ENCODE measurements at regions of chr21 and their contacts with region 1.

Region 1: DNA sequence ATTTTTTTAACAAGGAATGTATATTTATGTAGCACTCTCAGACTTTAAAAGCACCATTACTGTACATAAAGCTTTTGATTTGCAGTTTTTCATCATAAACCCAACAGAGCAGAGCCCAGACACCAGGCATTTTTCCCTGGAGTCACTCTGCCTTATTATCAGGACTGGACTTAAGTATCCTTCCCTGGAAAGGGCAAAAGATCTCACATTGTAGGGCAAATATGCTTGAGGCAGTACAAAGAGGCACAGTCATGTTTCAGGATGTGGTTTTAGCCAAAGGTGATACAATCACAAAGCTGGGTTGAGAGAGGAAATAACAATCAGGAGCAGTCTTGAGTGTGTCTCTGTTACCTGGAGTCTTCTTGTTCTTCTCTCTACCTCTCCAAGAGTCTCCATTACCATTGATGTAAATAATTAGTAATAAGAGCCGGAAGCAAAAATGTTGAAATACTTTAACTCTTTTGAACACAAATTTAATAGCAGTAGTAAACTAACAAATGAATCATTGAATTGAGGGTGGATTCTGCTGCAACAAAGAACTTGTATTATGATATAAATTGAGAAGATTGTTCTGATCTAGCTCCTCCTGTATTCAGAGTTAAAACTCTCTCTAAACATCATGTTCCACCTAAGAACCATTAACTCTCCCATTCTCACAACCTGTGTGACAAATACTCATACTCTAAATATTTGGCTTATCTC is 160.5 kb downstream of the LTN1 start:
- DNase-seq: peak in 6 of 14 experiments; percentile 3 to 86 (median 36)
- ATAC-seq: peak; percentile 90
- H3K4me3 ChIP-seq: peak overlapping the region; percentile 25
- H3K4me3 Mint-ChIP-seq: peak overlapping the region; percentile 65
- H3K27ac ChIP-seq: peak overlapping the region in 1 of 2 donors; percentile 35
- H3K27ac Mint-ChIP-seq: peak overlapping the region; percentile 79
- H3K4me1 ChIP-seq: peaks cover 39% of the 10 kb centered on the region
- H3K4me1 Mint-ChIP-seq: peaks cover 71% of the 10 kb centered on the region
- H3K27me3 ChIP-seq: no peaks in the 10 kb centered on the region
- H3K27me3 Mint-ChIP-seq: no peaks in the 10 kb centered on the region
- CTCF ChIP-seq: no peak

Region 2: DNA sequence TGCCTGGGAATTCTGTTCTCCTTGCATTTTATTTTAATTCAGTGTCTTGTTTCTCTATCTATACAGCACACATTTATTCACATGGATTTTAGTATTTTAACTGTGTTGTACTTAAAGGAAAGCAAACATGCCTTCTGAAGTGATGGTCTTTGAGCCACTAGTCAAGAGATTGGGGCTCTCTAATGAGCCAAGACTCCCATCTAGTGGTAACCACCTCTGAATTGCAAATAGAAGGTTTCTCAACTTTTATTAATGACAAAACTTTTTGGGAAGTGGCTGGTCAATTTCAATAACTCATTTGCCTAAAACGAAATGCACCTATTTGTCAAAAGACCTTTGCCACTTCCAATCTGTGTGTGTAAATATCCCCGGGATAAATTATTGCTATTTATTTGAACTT is 39.1 kb before region 1 on chr21:
- CTCF ChIA-PET with region 1: no interaction called
- POLR2A ChIA-PET with region 1: no interaction called
- intact Hi-C with region 1: loop called in 1 of 2 experiments (anchors 1 kb)
- DNase-seq: peak in 1 of 14 experiments; percentile 11
- ATAC-seq: no peak
- H3K4me3 ChIP-seq: no peak overlapping the region
- H3K4me3 Mint-ChIP-seq: no peak overlapping the region
- H3K27ac ChIP-seq: no peak overlapping the region
- H3K27ac Mint-ChIP-seq: no peak overlapping the region
- H3K4me1 ChIP-seq: no peaks in the 10 kb centered on the region
- H3K4me1 Mint-ChIP-seq: no peaks in the 10 kb centered on the region
- H3K27me3 ChIP-seq: no peaks in the 10 kb centered on the region
- H3K27me3 Mint-ChIP-seq: no peaks in the 10 kb centered on the region
- CTCF ChIP-seq: no peak

Region 3: DNA sequence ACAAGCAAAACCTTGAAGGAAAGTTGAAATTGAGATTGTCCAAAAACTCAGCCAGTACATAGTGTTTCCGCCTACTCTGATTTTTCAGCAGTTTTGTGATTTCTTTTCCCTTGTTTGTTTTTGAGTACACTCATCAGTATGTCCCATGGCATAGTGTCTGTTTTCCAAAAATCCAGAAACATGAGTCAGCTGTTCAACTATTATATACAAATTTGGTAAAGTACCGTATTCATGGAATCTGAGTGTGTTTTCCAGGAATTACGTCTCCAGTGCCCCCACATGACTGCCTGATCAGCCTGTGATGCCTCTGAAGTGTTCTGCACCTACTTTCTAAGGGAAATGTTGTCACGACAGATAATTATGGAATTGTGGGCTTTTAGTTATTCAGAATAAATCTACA is 26.3 kb before region 1 on chr21:
- CTCF ChIA-PET with region 1: no interaction called
- POLR2A ChIA-PET with region 1: no interaction called
- intact Hi-C with region 1: no loop called
- DNase-seq: no peak
- ATAC-seq: no peak
- H3K4me3 ChIP-seq: no peak overlapping the region
- H3K4me3 Mint-ChIP-seq: no peak overlapping the region
- H3K27ac ChIP-seq: no peak overlapping the region
- H3K27ac Mint-ChIP-seq: no peak overlapping the region
- H3K4me1 ChIP-seq: no peaks in the 10 kb centered on the region
- H3K4me1 Mint-ChIP-seq: no peaks in the 10 kb centered on the region
- H3K27me3 ChIP-seq: no peaks in the 10 kb centered on the region
- H3K27me3 Mint-ChIP-seq: no peaks in the 10 kb centered on the region
- CTCF ChIP-seq: no peak

Region 4: DNA sequence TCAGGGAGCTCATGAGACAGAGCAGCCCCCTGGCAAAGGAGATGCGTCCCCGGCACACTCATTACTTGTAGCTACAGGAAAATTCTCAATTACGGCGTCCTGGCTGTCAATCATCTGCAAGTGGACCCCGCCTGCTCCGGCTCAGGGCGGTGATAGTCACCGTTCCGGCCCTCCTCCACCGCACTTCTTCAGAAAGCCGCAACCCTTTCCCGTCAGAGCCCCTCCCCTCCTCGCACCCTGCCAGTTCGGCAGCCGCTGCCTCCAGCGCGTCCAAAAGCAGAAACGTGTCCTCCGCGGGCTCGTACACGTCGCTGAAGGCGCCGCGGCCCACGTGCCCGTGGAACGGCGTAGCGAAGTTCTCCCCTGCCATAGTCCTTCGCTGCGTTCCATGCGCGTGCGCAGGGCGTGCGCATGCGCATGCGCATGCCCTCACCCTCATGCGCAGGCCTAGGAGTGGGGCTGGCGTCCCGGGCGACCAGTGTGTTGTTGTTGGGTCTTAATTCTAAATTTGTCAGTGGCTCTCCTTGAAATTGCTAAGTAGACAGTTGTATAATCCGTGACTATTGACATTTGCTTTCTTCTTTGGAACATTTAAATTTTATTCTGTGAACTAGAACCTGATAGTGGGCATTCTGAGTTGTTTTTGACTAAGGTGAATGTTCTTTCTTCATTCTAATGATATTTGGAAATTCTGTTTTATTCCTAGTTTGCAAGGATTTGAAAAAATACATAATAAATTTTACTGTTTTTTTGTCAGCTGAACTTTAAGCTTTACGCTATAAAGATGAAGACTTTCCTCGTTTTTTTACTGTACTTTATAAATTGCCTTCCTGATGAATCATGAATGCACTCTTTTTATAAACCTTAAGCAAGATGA is 53.0 kb after region 1 on chr21:
- CTCF ChIA-PET with region 1: no interaction called
- POLR2A ChIA-PET with region 1: interaction called, 26 read pairs
- intact Hi-C with region 1: loop called (anchors 2 to 10 kb)
- DNase-seq: peak; percentile 81 to 98 (median 90)
- ATAC-seq: peak; percentile 94
- H3K4me3 ChIP-seq: peak overlapping the region; percentile 62
- H3K4me3 Mint-ChIP-seq: peak overlapping the region; percentile 93
- H3K27ac ChIP-seq: peak overlapping the region; percentile 88 to 91
- H3K27ac Mint-ChIP-seq: peak overlapping the region; percentile 97
- H3K4me1 ChIP-seq: peaks cover 11% of the 10 kb centered on the region
- H3K4me1 Mint-ChIP-seq: peaks cover 23% of the 10 kb centered on the region
- H3K27me3 ChIP-seq: no peaks in the 10 kb centered on the region
- H3K27me3 Mint-ChIP-seq: no peaks in the 10 kb centered on the region
- CTCF ChIP-seq: no peak